Activated CD8-positive, alpha-beta T cell treated with anti-CD3 and anti-CD28 coated beads for 36 hours (primary cell): ENCODE measurements at regions of chr7 and their contacts with region 1.

Region 1: GRCh38 chr7:74544706-74545469 is 91.2 kb downstream of the GTF2IRD1 start:
- DNase-seq: peak; percentile 53
- ATAC-seq: peak; percentile 56
- H3K4me3 Mint-ChIP-seq: no peak overlapping the region
- H3K27ac Mint-ChIP-seq: no peak overlapping the region
- H3K4me1 Mint-ChIP-seq: no peaks in the 10 kb centered on the region
- H3K27me3 Mint-ChIP-seq: no peaks in the 10 kb centered on the region
- CTCF ChIP-seq: peak; percentile 61

Region 2: DNA sequence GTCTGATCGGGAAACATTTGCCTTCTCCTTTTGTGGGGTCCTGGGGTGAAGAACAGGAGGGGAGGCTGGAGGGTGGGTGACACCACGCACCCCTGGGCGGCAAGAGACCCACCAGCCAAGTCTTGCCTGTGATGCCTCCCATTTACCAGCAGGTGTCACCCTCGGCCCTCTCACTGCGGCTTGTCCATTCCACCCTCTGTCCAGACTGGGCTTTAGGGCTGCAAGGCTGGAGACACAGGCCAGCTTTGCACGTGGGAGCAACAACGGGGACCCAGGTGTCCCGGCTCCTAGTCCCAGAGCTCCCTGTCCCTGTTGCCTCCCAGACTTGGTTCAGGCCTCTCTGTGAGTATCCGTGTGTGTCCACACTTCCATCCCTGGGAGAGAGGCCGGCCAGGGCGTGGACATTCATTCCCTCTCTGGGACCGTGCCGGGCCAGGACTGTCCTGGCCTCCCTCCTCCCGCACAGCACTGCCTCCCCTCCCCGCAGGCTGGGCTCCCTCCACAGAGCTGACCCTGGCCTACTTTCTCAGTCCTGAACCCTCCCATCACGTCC is 127.4 kb before region 1 on chr7:
- CTCF ChIA-PET with region 1: interaction called, 3 read pairs
- POLR2A ChIA-PET with region 1: no interaction called
- intact Hi-C with region 1: loop called (anchors 5 kb)
- DNase-seq: peak; percentile 62
- ATAC-seq: peak; percentile 87
- H3K4me3 Mint-ChIP-seq: no peak overlapping the region
- H3K27ac Mint-ChIP-seq: no peak overlapping the region
- H3K4me1 Mint-ChIP-seq: no peaks in the 10 kb centered on the region
- H3K27me3 Mint-ChIP-seq: no peaks in the 10 kb centered on the region
- CTCF ChIP-seq: peak; percentile 97

Region 3: DNA sequence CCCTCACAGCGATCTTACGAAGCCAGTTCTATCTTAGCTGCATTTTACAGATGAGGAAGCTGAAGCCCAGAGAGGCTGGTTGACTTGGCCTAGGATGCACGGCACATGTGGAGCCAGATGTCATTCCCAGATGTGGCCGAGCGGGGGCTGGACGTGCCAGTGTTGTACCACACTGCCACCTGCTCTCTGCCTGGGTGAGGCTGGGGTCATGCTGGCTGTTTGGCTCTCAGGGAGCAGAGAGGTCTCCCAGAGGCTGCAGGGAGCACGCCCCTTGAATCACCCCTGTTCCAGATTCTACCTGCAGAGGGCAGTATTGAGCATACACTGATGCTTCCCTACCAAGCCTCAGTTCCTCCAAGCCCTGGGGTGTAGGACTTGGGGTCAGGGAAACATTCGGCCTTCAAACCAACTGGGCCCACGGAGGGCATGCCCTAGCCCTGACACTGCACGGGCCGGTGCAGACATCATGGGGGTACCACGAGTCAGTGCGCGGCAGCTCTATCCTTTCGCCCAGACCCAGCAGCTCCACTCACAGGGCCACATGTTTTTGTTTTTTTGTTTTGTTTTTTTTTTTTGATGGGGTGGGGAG is 95.0 kb before region 1 on chr7:
- CTCF ChIA-PET with region 1: interaction called, 5 read pairs
- POLR2A ChIA-PET with region 1: no interaction called
- intact Hi-C with region 1: loop called (anchors 10 kb)
- DNase-seq: peak; percentile 81
- ATAC-seq: peak; percentile 14
- H3K4me3 Mint-ChIP-seq: no peak overlapping the region
- H3K27ac Mint-ChIP-seq: no peak overlapping the region
- H3K4me1 Mint-ChIP-seq: peaks cover 10% of the 10 kb centered on the region
- H3K27me3 Mint-ChIP-seq: peaks cover 7% of the 10 kb centered on the region
- CTCF ChIP-seq: peak; percentile 86

Region 4: GRCh38 chr7:74575138-74575727 is 30.3 kb after region 1 on chr7:
- CTCF ChIA-PET with region 1: no interaction called
- POLR2A ChIA-PET with region 1: no interaction called
- intact Hi-C with region 1: no loop called
- DNase-seq: no peak
- ATAC-seq: no peak
- H3K4me3 Mint-ChIP-seq: no peak overlapping the region
- H3K27ac Mint-ChIP-seq: no peak overlapping the region
- H3K4me1 Mint-ChIP-seq: no peaks in the 10 kb centered on the region
- H3K27me3 Mint-ChIP-seq: no peaks in the 10 kb centered on the region
- CTCF ChIP-seq: no peak